ENCODE measurements at regions of chr2 and their contacts with region 1.

Region 1: GRCh38 chr2:112692496-112692911 is 28.3 kb upstream of the NT5DC4 start:
- DNase-seq: peak; percentile 82
- CTCF ChIP-seq: no peak

Region 2: DNA sequence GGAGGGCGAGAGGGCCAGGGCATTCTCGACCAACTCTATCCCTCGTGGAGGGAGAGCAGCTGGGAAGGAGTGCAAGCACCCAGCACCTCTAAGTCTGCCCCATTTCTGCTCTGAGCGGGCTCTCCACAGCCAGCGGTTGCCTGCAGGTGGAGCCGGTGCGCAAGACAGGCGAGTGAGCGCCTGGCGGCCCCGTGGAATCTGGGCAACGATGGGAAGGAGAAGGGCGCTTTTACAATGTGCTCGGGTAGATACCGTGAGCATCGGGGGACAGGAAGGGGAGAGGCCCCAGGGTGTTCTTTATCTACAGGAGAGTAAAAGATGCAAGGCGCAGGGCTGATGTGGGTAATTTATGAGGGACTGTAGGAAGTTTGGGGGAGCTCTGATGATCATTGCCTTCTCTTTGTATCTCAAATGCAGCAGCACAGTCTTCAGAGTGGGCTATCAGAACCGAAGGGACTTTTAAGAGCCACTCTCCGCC is 211.4 kb before region 1 on chr2:
- CTCF ChIA-PET with region 1: no interaction called
- POLR2A ChIA-PET with region 1: no interaction called
- DNase-seq: peak; percentile 89
- CTCF ChIP-seq: peak; percentile 95

Region 3: DNA sequence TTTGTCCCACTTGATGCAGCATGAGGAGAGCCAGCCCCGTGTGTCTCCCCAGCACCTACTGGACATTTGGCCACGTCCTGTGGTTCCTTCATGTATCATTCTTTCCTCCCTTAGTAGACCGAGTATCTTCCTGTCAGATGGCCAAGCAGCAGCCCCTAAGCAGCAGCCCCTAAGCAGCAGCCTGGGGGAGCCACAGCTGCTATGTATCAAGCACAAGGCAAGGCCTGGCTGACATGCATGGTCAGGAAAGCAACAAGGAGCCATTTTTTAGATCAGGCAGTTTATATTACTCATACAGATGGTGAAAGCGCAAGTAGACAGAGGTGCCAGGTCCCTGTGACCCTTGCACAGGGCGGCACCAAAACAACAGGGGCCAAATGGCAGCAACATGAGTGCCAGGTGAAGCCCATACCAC is 86.0 kb before region 1 on chr2:
- CTCF ChIA-PET with region 1: interaction called, 19 read pairs
- POLR2A ChIA-PET with region 1: no interaction called
- DNase-seq: no peak
- CTCF ChIP-seq: no peak

Region 4: GRCh38 chr2:112645310-112646101 is 47.0 kb before region 1 on chr2 and contains the start of gene SLC20A1:
- CTCF ChIA-PET with region 1: interaction called, 13 read pairs
- POLR2A ChIA-PET with region 1: interaction called, 7 read pairs
- DNase-seq: peak; percentile 100
- CTCF ChIP-seq: peak; percentile 58

Region 5: DNA sequence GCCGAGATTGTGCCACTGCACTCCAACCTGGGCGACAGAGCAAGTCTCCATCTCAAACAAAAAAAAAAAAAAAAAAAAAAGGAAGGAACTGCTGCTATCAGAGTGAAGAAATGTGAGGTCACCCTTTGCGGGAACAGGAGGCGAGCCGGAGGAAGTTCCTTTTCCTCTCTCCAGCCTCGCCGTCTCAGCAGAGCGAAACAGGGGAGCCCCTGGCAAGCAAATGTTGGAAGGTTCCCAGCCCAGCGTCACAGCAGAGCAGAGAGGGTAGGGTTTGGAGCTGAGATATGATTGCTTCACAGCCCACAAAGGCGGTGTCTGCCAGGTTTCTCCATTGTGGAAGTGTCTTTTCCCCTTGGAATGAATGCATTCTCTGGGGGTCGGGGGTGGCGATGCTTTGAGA is 18.3 kb before region 1 on chr2:
- CTCF ChIA-PET with region 1: interaction called, 67 read pairs
- POLR2A ChIA-PET with region 1: no interaction called
- DNase-seq: no peak
- CTCF ChIP-seq: no peak

Region 6: GRCh38 chr2:112706170-112706664 is 13.7 kb after region 1 on chr2:
- CTCF ChIA-PET with region 1: interaction called, 40 read pairs
- POLR2A ChIA-PET with region 1: interaction called, 6 read pairs
- DNase-seq: no peak
- CTCF ChIP-seq: no peak

Region 7: GRCh38 chr2:112764071-112765044 is 71.9 kb after region 1 on chr2 and contains the start of gene CKAP2L:
- CTCF ChIA-PET with region 1: no interaction called
- POLR2A ChIA-PET with region 1: no interaction called
- DNase-seq: peak; percentile 97
- CTCF ChIP-seq: no peak